Naive thymus-derived CD4-positive, alpha-beta T cell (primary cell): ENCODE measurements at regions of chr2 and their contacts with region 1.

Region 1: DNA sequence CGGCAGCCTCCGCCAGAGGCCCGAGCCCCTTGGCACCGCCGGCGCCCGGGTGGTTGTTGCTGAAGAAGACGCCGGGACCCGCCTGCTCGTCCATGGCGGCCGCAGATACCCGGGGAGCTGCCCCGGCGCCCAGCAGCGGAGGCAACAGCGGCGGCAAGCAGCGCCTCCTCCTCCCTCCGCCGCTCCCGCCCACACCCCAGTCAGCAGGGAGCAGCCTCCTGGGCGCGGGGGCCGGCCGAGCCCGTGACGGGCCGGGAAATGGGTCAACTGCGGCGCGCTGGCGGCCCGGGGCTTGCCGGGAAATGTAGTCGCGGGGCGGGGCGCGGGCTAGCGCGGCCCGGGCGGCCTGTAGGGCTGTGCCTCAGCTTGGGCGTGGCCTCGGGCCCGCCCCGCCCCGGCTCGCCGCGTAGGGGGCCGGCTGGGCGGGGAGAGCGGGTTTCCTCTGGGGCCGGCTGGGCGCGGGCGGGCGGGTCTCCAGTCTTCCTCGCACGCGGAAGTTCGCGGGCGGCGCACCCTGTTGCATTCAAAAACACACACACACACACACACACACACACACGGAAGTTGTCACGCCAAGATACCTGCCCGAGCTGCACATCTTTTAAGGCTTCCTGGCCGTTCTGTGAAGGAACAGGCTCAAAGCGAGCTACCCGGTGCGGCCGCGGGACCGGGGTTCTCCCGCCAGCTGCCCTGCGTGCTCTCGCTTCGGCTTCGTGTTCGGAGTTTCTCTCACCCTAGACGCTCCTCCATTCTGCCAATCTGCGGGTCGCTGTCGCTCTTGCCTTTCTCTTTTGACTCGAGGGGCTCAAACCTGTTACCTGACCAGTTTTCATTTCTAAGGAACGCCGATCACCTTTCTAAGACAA is at the start of gene STRN:
- DNase-seq: peak; percentile 96 to 99 (median 99)
- ATAC-seq: peak; percentile 97
- H3K4me3 ChIP-seq: peak within 1 kb of the TSS; percentile 89
- H3K4me3 Mint-ChIP-seq: peak within 1 kb of the TSS; percentile 92 to 99 (median 98)
- H3K27ac ChIP-seq: peak within 1 kb of the TSS; percentile 90
- H3K27ac Mint-ChIP-seq: peak within 1 kb of the TSS; percentile 96 to 100 (median 98)
- H3K4me1 ChIP-seq: peaks cover 8 to 19% of the 10 kb centered on the region in 2 donors
- H3K4me1 Mint-ChIP-seq: peaks cover 35 to 57% (median 48%) of the 10 kb centered on the region in 7 donors
- H3K27me3 ChIP-seq: no peaks in the 10 kb centered on the region
- H3K27me3 Mint-ChIP-seq: no peaks in the 10 kb centered on the region
- total RNA-seq, gene STRN: 23.0 to 35.0 (median 30.9) TPM

Region 2: DNA sequence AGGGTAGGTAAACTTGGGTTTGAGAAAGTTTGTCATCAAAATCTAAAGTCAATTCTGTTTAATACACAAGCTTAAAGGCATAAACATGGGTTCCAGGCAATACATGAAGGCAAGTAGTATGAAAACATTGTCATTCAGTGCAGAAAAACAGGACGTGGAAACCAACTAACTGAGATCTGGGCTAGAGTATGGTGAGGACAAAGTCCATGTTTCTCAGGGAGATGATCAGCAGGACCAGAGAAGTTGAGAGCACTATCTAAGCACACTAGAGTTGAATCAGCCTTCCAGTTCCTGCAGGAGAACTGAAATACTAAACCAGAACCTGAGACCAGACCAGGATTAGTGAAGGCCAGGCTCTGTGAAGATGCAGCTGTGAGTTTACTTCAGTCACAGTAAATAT is 913.8 kb before region 1 on chr2:
- CTCF ChIA-PET with region 1: no interaction called
- POLR2A ChIA-PET with region 1: no interaction called
- intact Hi-C with region 1: no loop called
- DNase-seq: no peak
- ATAC-seq: no peak
- H3K4me3 ChIP-seq: no peak overlapping the region
- H3K4me3 Mint-ChIP-seq: no peak overlapping the region
- H3K27ac ChIP-seq: no peak overlapping the region
- H3K27ac Mint-ChIP-seq: no peak overlapping the region
- H3K4me1 ChIP-seq: no peaks in the 10 kb centered on the region
- H3K4me1 Mint-ChIP-seq: peaks cover 0 to 6% (median 1%) of the 10 kb centered on the region in 7 donors
- H3K27me3 ChIP-seq: no peaks in the 10 kb centered on the region
- H3K27me3 Mint-ChIP-seq: peaks cover 0 to 10% (median 7%) of the 10 kb centered on the region in 5 donors

Region 3: GRCh38 chr2:36197181-36197971 is 769.2 kb before region 1 on chr2:
- CTCF ChIA-PET with region 1: no interaction called
- POLR2A ChIA-PET with region 1: no interaction called
- intact Hi-C with region 1: no loop called
- DNase-seq: no peak
- ATAC-seq: no peak
- H3K4me3 ChIP-seq: no peak overlapping the region
- H3K4me3 Mint-ChIP-seq: no peak overlapping the region
- H3K27ac ChIP-seq: no peak overlapping the region
- H3K27ac Mint-ChIP-seq: no peak overlapping the region
- H3K4me1 ChIP-seq: no peaks in the 10 kb centered on the region
- H3K4me1 Mint-ChIP-seq: no peaks in the 10 kb centered on the region
- H3K27me3 ChIP-seq: no peaks in the 10 kb centered on the region
- H3K27me3 Mint-ChIP-seq: peaks cover 0 to 19% (median 0%) of the 10 kb centered on the region in 5 donors

Region 4: DNA sequence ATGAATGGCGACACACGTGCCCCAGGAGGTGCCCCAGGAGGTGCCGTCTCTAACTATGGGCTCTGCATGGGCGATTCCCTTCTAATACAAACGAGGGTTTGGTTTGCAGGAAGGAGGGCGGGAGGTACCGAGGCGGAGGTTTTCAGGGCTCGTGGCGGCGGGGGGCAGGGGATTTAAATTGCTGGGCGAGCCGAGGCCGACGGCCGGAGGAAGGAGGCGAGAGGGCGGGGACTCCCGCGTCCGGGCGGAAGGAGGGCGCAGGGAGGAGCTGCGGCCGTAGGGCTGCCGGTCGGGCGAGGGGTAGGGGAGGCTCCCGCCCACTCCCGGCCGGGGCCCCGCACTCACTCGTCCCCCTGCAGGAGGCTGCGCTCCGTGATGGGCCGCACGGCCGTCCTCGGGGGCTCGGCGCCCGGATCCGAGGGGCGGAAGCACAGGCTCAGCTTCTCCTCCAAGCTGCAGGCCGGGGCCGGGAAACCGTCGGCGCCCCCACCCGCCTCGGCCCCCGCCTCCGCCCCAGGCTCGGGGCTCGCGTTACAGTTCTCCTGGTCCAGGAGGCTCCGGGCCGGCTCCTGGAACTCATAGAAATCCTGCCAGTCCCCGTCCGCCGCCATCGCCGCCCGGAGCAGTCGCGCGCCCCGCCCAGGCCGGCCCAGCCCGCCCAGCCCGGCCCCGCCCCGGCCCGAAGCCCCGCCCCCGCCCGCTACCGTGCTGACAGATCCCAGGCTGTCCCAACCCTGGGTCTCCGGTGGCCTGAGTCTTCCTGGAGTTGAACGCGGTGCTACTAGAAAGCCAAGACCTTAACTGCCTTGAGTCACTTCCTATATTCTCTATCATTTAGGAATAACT is 368.8 kb before region 1 on chr2 and contains the start of gene FEZ2:
- CTCF ChIA-PET with region 1: no interaction called
- POLR2A ChIA-PET with region 1: no interaction called
- intact Hi-C with region 1: loop called in 1 of 2 experiments (anchors 5 kb)
- DNase-seq: peak; percentile 24 to 80 (median 41)
- ATAC-seq: peak; percentile 92
- H3K4me3 ChIP-seq: peak within 1 kb of the TSS; percentile 63
- H3K4me3 Mint-ChIP-seq: peak within 1 kb of the TSS; percentile 91 to 98 (median 92)
- H3K27ac ChIP-seq: peak within 1 kb of the TSS; percentile 60
- H3K27ac Mint-ChIP-seq: peak within 1 kb of the TSS; percentile 69 to 97 (median 83)
- H3K4me1 ChIP-seq: peaks cover 9 to 16% of the 10 kb centered on the region in 2 donors
- H3K4me1 Mint-ChIP-seq: peaks cover 26 to 45% (median 35%) of the 10 kb centered on the region in 7 donors
- H3K27me3 ChIP-seq: no peaks in the 10 kb centered on the region
- H3K27me3 Mint-ChIP-seq: no peaks in the 10 kb centered on the region
- total RNA-seq, gene FEZ2: 11.2 to 21.9 (median 14.0) TPM

Region 5: DNA sequence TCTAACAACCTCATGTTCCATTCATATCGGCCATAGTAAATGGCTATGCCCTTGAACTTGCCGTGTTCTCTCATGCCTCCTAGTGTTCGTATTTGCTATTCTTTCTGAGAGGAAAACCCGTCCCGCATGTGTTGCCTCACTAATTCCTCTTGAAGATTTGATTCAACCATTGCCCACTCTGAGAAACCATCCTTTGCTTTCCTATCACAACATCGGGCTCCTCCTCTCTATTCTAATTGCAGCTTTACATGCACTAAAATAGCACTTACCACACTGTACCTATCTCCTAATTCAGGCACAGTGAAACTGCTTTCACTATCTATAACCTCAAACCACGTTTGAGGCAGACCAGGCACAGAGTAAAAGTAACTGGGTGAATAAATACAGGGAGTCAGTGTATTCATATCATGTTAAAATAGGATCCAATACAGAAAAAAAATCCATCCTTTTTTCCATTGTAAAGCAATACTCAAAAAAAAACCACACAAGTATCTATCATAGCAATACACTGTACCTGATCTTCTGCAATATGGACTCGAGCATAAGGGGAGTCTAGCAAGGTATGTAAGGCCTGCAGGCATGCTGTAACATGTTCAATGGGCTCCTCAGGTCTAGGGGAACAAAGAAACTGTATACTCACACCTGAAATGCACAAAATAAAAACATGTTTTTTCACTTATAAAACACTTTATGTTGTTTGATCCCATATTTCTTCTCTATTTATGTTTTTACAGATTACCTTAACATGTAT is 38.7 kb after region 1 on chr2:
- CTCF ChIA-PET with region 1: no interaction called
- POLR2A ChIA-PET with region 1: interaction called, 3 read pairs
- intact Hi-C with region 1: loop called (anchors 1 kb)
- DNase-seq: peak in 7 of 9 donors; percentile 15 to 46 (median 18)
- ATAC-seq: peak; percentile 80
- H3K4me3 ChIP-seq: no peak overlapping the region
- H3K4me3 Mint-ChIP-seq: peak overlapping the region in 8 of 10 donors; percentile 15 to 76 (median 56)
- H3K27ac ChIP-seq: peak overlapping the region; percentile 22
- H3K27ac Mint-ChIP-seq: peak overlapping the region; percentile 28 to 84 (median 71)
- H3K4me1 ChIP-seq: no peaks in the 10 kb centered on the region
- H3K4me1 Mint-ChIP-seq: peaks cover 5 to 17% (median 9%) of the 10 kb centered on the region in 7 donors
- H3K27me3 ChIP-seq: no peaks in the 10 kb centered on the region
- H3K27me3 Mint-ChIP-seq: no peaks in the 10 kb centered on the region

Region 6: DNA sequence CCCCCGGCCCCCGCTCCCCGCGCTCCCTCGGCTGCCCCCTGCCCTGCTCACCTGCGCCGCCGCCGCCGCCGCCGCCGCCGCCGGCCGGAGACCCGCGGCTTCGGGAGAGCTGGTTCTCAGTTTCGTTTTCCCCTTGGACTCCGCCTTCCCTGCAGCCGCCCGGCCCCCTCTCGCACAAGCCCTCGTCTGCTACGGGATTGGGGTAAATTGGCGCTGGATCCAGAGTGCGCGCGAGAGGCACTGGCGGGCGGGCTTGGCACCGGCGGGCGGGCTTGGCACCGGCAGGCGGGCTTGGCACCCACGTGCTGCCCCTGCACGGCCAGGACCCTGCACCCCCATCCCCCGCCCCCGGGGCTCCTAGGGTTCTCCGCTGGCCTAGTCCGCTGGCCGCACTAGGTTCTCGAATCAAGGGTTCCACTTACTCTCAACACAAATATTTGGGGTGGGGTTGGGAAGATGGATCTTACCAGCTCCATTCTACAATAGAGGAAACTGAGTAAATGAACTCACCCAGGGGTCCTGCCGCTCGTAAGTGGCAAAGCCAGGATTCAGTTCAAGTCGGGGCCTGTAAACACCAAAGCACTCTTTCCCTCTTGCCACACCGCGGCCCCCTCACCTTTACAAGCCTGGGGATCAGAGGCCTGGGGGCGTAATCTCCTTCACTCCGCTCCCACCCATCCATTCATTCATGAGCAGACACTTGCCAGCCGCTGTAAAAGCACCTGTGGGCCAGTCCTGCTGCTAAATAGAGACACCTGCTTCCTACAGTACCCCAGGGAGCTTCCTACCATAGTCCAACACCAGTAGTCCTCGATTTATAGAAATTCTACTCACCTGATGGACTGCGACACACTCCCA is 190.5 kb after region 1 on chr2 and contains the start of gene EIF2AK2:
- CTCF ChIA-PET with region 1: no interaction called
- POLR2A ChIA-PET with region 1: no interaction called
- intact Hi-C with region 1: loop called (anchors 1 kb)
- DNase-seq: peak; percentile 59 to 85 (median 80)
- ATAC-seq: peak; percentile 96
- H3K4me3 ChIP-seq: peak within 1 kb of the TSS; percentile 92
- H3K4me3 Mint-ChIP-seq: peak within 1 kb of the TSS; percentile 88 to 99 (median 94)
- H3K27ac ChIP-seq: peak within 1 kb of the TSS; percentile 81
- H3K27ac Mint-ChIP-seq: peak within 1 kb of the TSS; percentile 86 to 96 (median 92)
- H3K4me1 ChIP-seq: peaks cover 18 to 25% of the 10 kb centered on the region in 2 donors
- H3K4me1 Mint-ChIP-seq: peaks cover 29 to 57% (median 48%) of the 10 kb centered on the region in 7 donors
- H3K27me3 ChIP-seq: no peaks in the 10 kb centered on the region
- H3K27me3 Mint-ChIP-seq: peaks cover 0 to 4% (median 0%) of the 10 kb centered on the region in 5 donors
- total RNA-seq, gene EIF2AK2: 21.2 to 91.9 (median 24.2) TPM

Region 7: DNA sequence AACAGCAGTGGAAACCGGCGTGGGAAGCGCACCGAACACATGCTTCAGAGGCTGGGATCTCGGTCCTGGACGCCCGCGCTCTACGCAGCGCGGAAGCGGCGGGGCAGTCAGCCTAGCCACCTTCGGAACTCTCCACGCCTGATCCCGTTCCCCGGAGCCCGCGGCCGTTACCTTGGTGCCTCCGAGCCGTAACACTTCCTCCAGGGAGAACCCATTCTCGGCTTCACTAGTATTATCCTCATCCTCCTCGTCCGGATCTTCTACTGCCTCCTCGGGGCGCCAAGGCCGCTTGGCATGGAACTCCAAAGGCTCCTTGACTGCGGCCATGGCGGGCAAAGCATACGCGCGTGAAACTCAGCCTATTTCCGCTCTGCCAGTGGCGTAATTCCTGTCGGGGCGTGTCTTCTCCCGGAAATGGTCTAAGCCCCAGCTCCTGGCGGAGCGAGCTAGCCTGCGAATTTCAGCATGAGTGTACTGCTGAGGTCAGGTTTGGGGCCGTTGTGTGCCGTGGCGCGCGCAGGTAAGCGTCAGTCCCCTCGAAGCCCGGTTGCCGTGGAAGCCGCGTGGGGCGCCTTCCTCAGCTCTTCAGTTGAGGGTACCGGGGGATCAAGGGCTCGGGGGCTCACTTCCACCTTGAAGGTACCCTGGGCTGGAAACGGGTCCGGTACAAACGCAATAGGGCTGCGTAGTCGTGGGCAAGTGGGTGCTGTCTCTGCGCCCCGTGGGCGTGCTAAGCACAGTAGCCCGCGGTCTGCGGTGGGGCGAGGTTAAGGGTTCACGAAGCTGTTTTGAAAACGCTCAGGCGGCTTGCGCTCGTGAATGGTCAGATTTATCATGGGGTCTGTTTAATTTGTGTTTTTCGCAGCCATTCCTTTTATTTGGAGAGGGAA is 264.9 kb after region 1 on chr2 and contains the starts of genes CEBPZ and NDUFAF7:
- CTCF ChIA-PET with region 1: no interaction called
- POLR2A ChIA-PET with region 1: no interaction called
- intact Hi-C with region 1: loop called (anchors 1 kb)
- DNase-seq: peak; percentile 71 to 87 (median 84)
- ATAC-seq: peak; percentile 95
- H3K4me3 ChIP-seq: peak within 1 kb of the TSS; percentile 84
- H3K4me3 Mint-ChIP-seq: no peak within 1 kb of the TSS
- H3K27ac ChIP-seq: peak within 1 kb of the TSS; percentile 93
- H3K27ac Mint-ChIP-seq: no peak within 1 kb of the TSS
- H3K4me1 ChIP-seq: peaks cover 31 to 39% of the 10 kb centered on the region in 2 donors
- H3K4me1 Mint-ChIP-seq: peaks cover 25 to 54% (median 43%) of the 10 kb centered on the region in 7 donors
- H3K27me3 ChIP-seq: no peaks in the 10 kb centered on the region
- H3K27me3 Mint-ChIP-seq: no peaks in the 10 kb centered on the region
- total RNA-seq, gene CEBPZ: 40.4 to 67.6 (median 56.4) TPM
- total RNA-seq, gene NDUFAF7: 21.6 to 38.2 (median 28.5) TPM

Region 8: GRCh38 chr2:37635504-37636380 is 669.1 kb after region 1 on chr2:
- CTCF ChIA-PET with region 1: no interaction called
- POLR2A ChIA-PET with region 1: no interaction called
- intact Hi-C with region 1: loop called in 1 of 2 experiments (anchors 1 kb)
- DNase-seq: peak; percentile 20 to 77 (median 39)
- ATAC-seq: peak; percentile 87
- H3K4me3 ChIP-seq: no peak overlapping the region
- H3K4me3 Mint-ChIP-seq: peak overlapping the region in 8 of 10 donors; percentile 13 to 49 (median 40)
- H3K27ac ChIP-seq: peak overlapping the region; percentile 41
- H3K27ac Mint-ChIP-seq: peak overlapping the region; percentile 5 to 84 (median 80)
- H3K4me1 ChIP-seq: peaks cover 24 to 58% of the 10 kb centered on the region in 2 donors
- H3K4me1 Mint-ChIP-seq: peaks cover 31 to 70% (median 36%) of the 10 kb centered on the region in 7 donors
- H3K27me3 ChIP-seq: no peaks in the 10 kb centered on the region
- H3K27me3 Mint-ChIP-seq: peaks cover 0 to 13% (median 0%) of the 10 kb centered on the region in 5 donors

Region 9: DNA sequence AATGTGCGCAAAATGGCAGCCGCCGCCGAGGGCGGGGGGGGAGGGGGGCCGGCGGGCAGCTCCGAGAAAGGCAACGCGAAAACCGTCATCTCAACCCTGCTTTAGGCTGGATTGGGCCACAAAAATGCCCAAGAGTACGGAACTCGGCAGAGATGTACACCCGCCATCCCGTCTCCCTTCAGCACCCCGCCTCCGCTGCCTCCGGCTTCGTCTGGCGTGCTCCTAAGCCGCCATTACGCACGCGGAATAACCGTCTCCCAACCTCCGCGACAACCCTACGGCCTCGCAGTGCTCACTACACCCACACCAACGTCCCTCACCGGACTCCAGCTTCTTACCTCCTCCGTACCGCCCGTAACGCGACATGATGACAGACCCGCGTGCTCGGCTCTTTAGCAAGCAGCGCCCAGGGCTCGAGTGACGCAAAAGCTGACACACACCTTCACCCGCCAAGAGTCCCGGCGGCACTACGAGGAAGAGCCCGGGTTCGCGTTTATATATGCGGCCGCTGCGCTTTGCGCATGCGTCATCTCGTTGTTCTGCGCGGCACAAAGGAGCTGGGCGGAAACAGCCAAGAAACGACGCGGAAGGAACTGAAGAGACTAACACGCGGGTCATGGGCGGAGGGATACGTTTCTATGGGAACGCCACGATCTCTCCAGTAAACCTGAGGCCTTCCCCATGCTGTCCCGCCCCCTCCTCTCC is 1784.4 kb after region 1 on chr2 and contains the start of gene SRSF7:
- CTCF ChIA-PET with region 1: no interaction called
- POLR2A ChIA-PET with region 1: interaction called, 3 read pairs
- intact Hi-C with region 1: loop called in 1 of 2 experiments (anchors 2 kb)
- DNase-seq: peak; percentile 95 to 98 (median 97)
- ATAC-seq: peak; percentile 87
- H3K4me3 ChIP-seq: peak within 1 kb of the TSS; percentile 96
- H3K4me3 Mint-ChIP-seq: peak within 1 kb of the TSS; percentile 95 to 100 (median 99)
- H3K27ac ChIP-seq: peak within 1 kb of the TSS; percentile 95
- H3K27ac Mint-ChIP-seq: peak within 1 kb of the TSS; percentile 98 to 100 (median 100)
- H3K4me1 ChIP-seq: peaks cover 31 to 41% of the 10 kb centered on the region in 2 donors
- H3K4me1 Mint-ChIP-seq: peaks cover 40 to 72% (median 58%) of the 10 kb centered on the region in 7 donors
- H3K27me3 ChIP-seq: no peaks in the 10 kb centered on the region
- H3K27me3 Mint-ChIP-seq: peaks cover 0 to 5% (median 0%) of the 10 kb centered on the region in 5 donors
- total RNA-seq, gene SRSF7: 259 to 503 (median 310) TPM